Vagina (tissue), 2 donors: ENCODE measurements at regions of chr18 and their contacts with region 1.

Region 1: GRCh38 chr18:34322365-34323289 is 97.9 kb upstream of the NOL4 start:
- DNase-seq: no peak
- H3K4me3 ChIP-seq: no peak overlapping the region
- H3K27ac ChIP-seq: no peak overlapping the region
- H3K4me1 ChIP-seq: no peaks in the 10 kb centered on the region
- H3K27me3 ChIP-seq: no peaks in the 10 kb centered on the region
- CTCF ChIP-seq: no peak
- POLR2A ChIP-seq: no peak

Region 2: GRCh38 chr18:34576622-34577021 is 254.0 kb after region 1 on chr18:
- intact Hi-C with region 1: loop called (anchors 5 kb)
- DNase-seq: no peak
- H3K4me3 ChIP-seq: no peak overlapping the region
- H3K27ac ChIP-seq: no peak overlapping the region
- H3K4me1 ChIP-seq: no peaks in the 10 kb centered on the region
- H3K27me3 ChIP-seq: no peaks in the 10 kb centered on the region
- CTCF ChIP-seq: no peak
- POLR2A ChIP-seq: no peak

Region 3: DNA sequence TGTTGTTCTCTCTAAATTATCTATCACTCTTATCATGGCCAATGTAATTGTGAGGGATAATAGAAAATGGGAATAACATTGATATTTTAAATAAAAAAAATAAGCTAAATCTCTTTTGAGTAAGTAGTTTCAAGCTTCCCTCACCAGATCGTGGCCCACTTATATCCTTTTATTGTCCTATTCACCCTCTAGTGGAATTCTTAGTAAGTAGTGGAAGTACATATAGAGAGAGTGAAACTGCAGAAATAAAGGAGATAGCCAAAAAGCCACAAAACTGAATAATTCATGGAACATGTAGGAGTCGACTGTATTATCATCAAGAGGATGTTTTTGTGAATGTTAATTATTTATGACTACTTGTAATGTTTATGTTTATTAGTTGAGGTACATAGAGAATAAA is 321.4 kb after region 1 on chr18:
- intact Hi-C with region 1: no loop called
- DNase-seq: no peak
- H3K4me3 ChIP-seq: no peak overlapping the region
- H3K27ac ChIP-seq: no peak overlapping the region
- H3K4me1 ChIP-seq: no peaks in the 10 kb centered on the region
- H3K27me3 ChIP-seq: no peaks in the 10 kb centered on the region
- CTCF ChIP-seq: no peak
- POLR2A ChIP-seq: no peak